Cardiac septum (tissue), 1 donor: ENCODE measurements at regions of chr14 and their contacts with region 1.

Region 1: GRCh38 chr14:93788543-93789227 is 400 bp upstream of the PRIMA1 start:
- DNase-seq: no peak

Region 2: GRCh38 chr14:93295541-93296220 is 493.0 kb before region 1 on chr14:
- intact Hi-C with region 1: no loop called
- DNase-seq: no peak

Region 3: GRCh38 chr14:93655078-93655750 is 133.5 kb before region 1 on chr14:
- intact Hi-C with region 1: loop called (anchors 2 kb)
- DNase-seq: no peak

Region 4: GRCh38 chr14:93742761-93743160 is 45.9 kb before region 1 on chr14:
- intact Hi-C with region 1: loop called (anchors 2 kb)
- DNase-seq: no peak

Region 5: DNA sequence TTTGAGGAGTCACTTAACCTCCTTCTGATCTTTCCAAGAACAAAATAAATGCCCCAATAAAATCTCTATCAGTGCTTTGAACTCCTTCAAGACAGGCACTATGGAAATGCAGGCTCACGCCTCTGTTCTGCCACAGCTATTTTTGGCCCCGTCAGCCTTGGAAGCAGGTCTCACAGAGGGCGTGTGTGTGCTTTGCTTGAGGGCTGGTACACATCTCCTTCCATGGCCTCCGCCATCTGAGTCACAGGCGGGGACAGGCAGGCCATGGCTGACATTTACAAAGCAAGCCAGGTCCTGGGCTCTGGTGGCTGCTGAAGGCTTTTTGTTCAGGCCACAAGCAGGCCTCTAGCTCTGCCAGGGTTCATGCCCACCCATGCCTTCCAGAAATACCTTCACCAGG is 16.4 kb before region 1 on chr14:
- intact Hi-C with region 1: no loop called
- DNase-seq: no peak

Region 6: DNA sequence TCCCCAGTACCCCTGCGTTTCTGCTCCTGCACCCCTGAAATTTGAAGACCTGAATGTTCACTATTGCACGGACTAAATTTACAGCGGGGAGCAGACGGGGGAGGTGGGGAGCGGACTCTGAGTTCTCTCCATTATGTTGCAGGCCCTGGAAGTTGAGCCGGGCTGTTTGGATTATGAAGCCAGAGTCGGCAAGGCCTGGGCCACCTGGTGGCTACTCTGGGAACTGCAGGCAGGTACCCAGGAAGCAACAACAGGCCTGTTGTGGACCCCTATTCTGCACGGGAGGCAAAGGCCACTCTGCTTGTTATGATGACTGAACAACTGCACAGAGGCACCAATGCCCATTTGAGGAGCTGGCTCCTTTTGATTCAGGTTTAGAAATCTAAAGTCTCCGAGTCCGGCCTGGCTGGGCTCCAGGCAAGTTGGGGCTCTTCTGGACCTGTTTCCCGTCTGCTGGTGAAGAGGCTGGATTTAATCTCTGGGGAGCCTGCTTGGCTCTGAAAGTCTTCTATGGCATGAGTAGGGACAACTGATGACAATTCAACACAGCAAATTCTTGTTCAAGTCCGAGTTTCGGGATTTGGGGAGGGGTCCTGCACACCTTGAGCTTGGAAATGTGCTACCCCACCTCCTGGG is 104.4 kb after region 1 on chr14:
- intact Hi-C with region 1: loop called (anchors 5 kb)
- DNase-seq: peak; percentile 82